ENCODE measurements at regions of chr1 and their contacts with region 1.

Region 1: DNA sequence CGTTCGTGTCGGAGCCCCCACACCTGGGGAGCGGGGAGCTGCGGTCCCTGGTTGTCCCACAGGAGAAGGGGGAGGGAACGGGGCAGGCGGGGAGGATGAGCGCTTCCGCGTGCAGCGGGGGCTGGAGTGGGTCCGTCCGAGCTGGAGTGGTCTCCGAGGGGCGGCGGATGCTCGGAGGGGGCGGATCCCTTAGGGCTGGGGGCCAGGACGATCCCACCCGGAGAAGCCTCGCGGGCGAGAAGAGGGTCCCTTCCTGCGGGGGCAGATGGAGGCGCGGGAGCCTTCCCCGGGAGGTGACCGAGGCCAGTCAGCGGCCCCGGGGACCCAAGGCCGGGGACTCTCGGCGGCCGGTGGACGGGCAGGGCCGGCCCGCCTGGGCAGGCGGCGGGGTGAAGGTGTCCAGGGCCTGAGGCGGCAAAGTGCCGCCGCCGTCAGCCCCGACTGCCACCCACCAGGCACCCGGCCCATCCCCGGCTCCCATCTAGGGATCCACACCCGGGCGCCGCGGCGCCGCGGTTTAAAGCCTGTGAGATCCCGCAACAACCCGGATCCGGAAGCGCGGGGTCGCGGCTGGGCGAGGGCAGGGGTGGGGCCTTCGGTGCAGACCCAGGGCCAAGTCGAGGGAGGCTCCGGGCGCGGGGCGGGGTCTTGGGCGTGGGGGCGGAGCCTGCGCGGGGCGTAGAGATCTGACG is 5.3 kb upstream of the CCDC27 start:
- DNase-seq: peak; percentile 93
- H3K4me3 Mint-ChIP-seq: peak overlapping the region; percentile 75
- H3K27ac Mint-ChIP-seq: peak overlapping the region; percentile 24
- H3K4me1 Mint-ChIP-seq: peaks cover 35% of the 10 kb centered on the region
- H3K27me3 Mint-ChIP-seq: no peaks in the 10 kb centered on the region

Region 2: GRCh38 chr1:3772027-3772714 is 25.2 kb after region 1 on chr1:
- CTCF ChIA-PET with region 1: no interaction called
- intact Hi-C with region 1: loop called (anchors 1 kb)
- DNase-seq: peak; percentile 94
- H3K4me3 Mint-ChIP-seq: peak overlapping the region; percentile 65
- H3K27ac Mint-ChIP-seq: peak overlapping the region; percentile 8
- H3K4me1 Mint-ChIP-seq: peaks cover 12% of the 10 kb centered on the region
- H3K27me3 Mint-ChIP-seq: no peaks in the 10 kb centered on the region

Measured in activated naive CD4-positive, alpha-beta T cell treated with anti-CD3 and anti-CD28 coated beads for 36 hours (primary cell).